ENCODE measurements at regions of chr5 and their contacts with region 1.

Region 1: GRCh38 chr5:34411470-34412384 is 244.4 kb upstream of the RAI14 start:
- DNase-seq: peak; percentile 24 to 53
- H3K4me3 ChIP-seq: no peak overlapping the region
- H3K4me3 Mint-ChIP-seq: peak overlapping the region; percentile 31
- H3K27ac Mint-ChIP-seq: peak overlapping the region; percentile 86
- H3K4me1 ChIP-seq: peaks cover 55% of the 10 kb centered on the region
- H3K4me1 Mint-ChIP-seq: peaks cover 17% of the 10 kb centered on the region
- H3K27me3 ChIP-seq: no peaks in the 10 kb centered on the region
- H3K27me3 Mint-ChIP-seq: no peaks in the 10 kb centered on the region
- CTCF ChIP-seq: no peak

Region 2: DNA sequence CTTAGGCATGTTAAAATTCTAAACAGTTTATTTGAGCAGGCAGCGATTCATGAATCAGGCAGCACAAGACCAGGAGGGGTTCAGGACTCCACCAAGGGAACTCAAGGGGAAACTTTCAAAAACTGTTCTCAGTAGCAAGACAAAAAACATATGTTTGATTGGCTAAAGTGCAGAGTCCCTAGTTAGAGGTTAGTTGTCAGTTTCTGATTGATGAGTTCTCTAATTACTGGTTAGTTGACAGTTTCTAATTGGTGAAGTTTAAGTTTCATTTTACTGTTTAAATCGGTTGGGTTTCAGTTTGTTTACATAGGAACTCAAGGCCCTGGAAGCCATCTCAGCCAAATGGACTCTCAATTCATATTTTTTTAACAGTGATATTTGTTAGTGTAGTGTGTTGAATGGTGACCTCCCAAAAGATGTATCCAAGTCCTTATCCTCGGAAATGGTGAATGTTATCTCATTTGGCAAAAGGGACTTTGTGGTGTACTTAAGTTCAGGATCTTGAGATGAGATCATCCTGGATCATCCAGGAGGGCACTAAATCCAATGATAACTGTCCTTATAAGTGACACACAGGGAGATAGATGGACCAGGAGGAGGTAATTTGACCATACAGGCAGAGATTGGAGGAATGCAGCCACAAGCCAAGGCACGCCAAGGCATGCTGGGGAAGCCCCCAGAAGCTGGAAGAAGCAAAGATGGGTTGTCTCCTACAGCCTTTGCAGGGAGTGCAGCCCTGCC is 25.2 kb after region 1 on chr5:
- CTCF ChIA-PET with region 1: interaction called, 7 read pairs
- POLR2A ChIA-PET with region 1: interaction called, 3 read pairs
- intact Hi-C with region 1: loop called (anchors 1 kb)
- DNase-seq: no peak
- H3K4me3 ChIP-seq: no peak overlapping the region
- H3K4me3 Mint-ChIP-seq: no peak overlapping the region
- H3K27ac Mint-ChIP-seq: no peak overlapping the region
- H3K4me1 ChIP-seq: peaks cover 22% of the 10 kb centered on the region
- H3K4me1 Mint-ChIP-seq: peaks cover 7% of the 10 kb centered on the region
- H3K27me3 ChIP-seq: no peaks in the 10 kb centered on the region
- H3K27me3 Mint-ChIP-seq: no peaks in the 10 kb centered on the region
- CTCF ChIP-seq: no peak

Region 3: DNA sequence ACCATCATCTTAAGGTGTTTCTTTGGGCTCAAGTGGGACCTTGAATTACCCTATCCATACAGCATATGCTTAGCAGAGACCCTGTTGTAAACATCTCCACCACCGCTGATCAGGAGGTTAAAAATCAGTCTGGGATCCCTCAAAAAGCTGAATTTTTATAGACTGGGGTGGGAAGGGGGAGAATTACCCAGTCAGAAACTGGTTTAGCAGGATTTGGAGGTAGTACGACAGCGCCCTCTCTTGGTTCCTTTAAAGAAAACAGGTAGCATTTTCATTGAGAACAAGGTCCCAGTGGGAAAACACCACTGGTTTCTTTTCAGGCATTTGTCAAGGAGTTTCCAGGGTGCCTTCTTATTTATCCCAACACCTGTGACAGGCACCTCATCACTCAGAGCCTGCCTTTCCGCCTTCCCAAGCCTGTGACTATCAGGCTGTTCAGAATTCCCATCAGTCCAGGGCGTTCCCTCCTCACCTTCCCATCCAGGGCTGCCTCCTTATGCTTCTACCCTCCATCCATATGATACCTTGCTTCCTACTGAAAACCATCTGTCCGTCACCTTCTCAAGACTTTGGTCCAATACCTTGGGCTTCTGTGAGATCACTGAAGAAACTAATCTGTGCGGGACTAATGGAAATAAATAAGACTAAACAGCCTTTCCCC is 40.6 kb after region 1 on chr5:
- CTCF ChIA-PET with region 1: no interaction called
- POLR2A ChIA-PET with region 1: no interaction called
- intact Hi-C with region 1: loop called (anchors 1 kb)
- DNase-seq: peak in 1 of 2 experiments; percentile 54
- H3K4me3 ChIP-seq: no peak overlapping the region
- H3K4me3 Mint-ChIP-seq: no peak overlapping the region
- H3K27ac Mint-ChIP-seq: no peak overlapping the region
- H3K4me1 ChIP-seq: peaks cover 8% of the 10 kb centered on the region
- H3K4me1 Mint-ChIP-seq: no peaks in the 10 kb centered on the region
- H3K27me3 ChIP-seq: no peaks in the 10 kb centered on the region
- H3K27me3 Mint-ChIP-seq: no peaks in the 10 kb centered on the region
- CTCF ChIP-seq: peak; percentile 49 to 69

Region 4: DNA sequence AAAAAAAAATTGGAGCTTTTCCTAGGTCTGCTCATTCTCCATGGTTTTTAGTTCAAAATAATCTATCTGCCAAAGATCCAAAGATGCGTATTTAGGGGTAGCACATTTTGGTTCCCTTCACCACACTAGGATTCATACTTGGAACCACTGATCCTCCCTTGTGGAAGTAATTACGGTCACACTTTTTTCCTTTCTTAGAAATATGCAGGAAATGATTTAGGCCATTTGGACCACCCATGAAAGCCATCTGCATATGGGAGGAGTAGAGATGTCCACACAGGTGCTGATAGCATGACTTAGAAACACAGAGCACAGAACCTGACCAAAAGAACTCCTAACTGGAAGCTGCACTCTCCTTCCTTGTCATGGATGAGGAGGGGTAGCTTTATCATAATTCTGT is 138.5 kb after region 1 on chr5:
- CTCF ChIA-PET with region 1: no interaction called
- POLR2A ChIA-PET with region 1: no interaction called
- intact Hi-C with region 1: no loop called
- DNase-seq: no peak
- H3K4me3 ChIP-seq: no peak overlapping the region
- H3K4me3 Mint-ChIP-seq: peak overlapping the region; percentile 22
- H3K27ac Mint-ChIP-seq: peak overlapping the region; percentile 24
- H3K4me1 ChIP-seq: peaks cover 10% of the 10 kb centered on the region
- H3K4me1 Mint-ChIP-seq: peaks cover 8% of the 10 kb centered on the region
- H3K27me3 ChIP-seq: no peaks in the 10 kb centered on the region
- H3K27me3 Mint-ChIP-seq: no peaks in the 10 kb centered on the region
- CTCF ChIP-seq: no peak